ENCODE measurements at regions of chr16 and their contacts with region 1.

Region 1: GRCh38 chr16:73912281-73912680 is 384.3 kb upstream of the PSMD7 start:
- DNase-seq: no peak
- ATAC-seq: no peak
- H3K4me3 ChIP-seq: no peak overlapping the region
- H3K27ac ChIP-seq: no peak overlapping the region
- H3K4me1 ChIP-seq: peaks cover 0 to 3% (median 0%) of the 10 kb centered on the region in 12 donors
- H3K27me3 ChIP-seq: no peaks in the 10 kb centered on the region
- CTCF ChIP-seq: no peak
- POLR2A ChIP-seq: no peak

Region 2: GRCh38 chr16:73949574-73950320 is 37.5 kb after region 1 on chr16:
- intact Hi-C with region 1: loop called in 1 of 10 experiments (anchors 5 kb)
- DNase-seq: no peak
- ATAC-seq: peak; percentile 19 to 76 (median 72)
- H3K4me3 ChIP-seq: no peak overlapping the region
- H3K27ac ChIP-seq: peak overlapping the region in 7 of 12 donors; percentile 0 to 57 (median 41)
- H3K4me1 ChIP-seq: peaks cover 0 to 7% (median 0%) of the 10 kb centered on the region in 12 donors
- H3K27me3 ChIP-seq: peaks cover 0 to 4% (median 0%) of the 10 kb centered on the region in 9 donors
- CTCF ChIP-seq: no peak
- POLR2A ChIP-seq: no peak